Activated CD4-positive, alpha-beta memory T cell treated with anti-CD3 and anti-CD28 coated beads, Interleukin-2, amount 10 ng/mL, durations not matched to agents 7 days and 5 days (primary cell): ENCODE measurements at regions of chr6 and their contacts with region 1.

Region 1: DNA sequence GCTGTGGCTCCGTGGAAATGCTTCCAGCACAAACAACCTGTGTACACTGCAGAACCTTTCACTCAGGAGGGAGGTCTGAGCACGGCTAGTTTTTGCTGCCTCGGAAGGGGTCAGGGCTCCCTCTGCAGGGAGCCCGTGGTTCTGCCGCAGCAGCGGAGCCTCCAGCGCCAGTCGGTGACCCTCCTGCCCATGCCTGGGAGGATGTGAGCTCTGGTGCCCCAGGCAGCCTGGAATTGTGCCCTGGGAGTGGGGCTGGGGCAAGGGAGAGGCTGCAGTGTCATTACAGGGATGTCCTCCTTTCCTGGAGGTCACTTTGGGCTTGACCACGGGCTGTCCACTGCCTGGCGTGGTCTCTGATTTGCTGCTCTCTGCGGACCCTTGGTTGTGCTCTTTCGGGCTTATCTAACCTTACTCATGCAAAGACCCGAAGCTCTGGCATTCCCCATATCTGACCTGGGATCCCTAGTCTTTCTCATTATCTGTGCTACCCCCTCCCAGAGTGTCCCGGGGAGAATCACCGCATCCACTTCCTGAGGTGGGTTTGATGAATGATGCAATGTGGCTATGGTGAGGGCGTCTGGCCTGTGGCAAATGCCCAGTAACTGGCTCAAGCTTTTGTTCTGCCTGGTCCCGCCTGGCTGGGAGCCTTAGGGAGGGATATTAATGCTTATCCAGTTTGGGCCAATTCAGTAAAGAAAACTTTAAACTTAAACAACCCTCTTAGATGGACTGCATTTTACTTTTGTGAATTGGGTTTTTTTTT is 59.6 kb upstream of the TAGAP start:
- DNase-seq: peak; percentile 84
- H3K4me3 Mint-ChIP-seq: no peak overlapping the region
- H3K27ac Mint-ChIP-seq: peak overlapping the region; percentile 22
- H3K4me1 Mint-ChIP-seq: peaks cover 64% of the 10 kb centered on the region
- H3K27me3 Mint-ChIP-seq: no peaks in the 10 kb centered on the region

Region 2: GRCh38 chr6:158999666-159000403 is 104.5 kb before region 1 on chr6 and contains the start of gene RSPH3:
- CTCF ChIA-PET with region 1: interaction called, 410 read pairs
- POLR2A ChIA-PET with region 1: interaction called, 13 read pairs
- DNase-seq: peak; percentile 92
- H3K4me3 Mint-ChIP-seq: peak within 1 kb of the TSS; percentile 97
- H3K27ac Mint-ChIP-seq: peak within 1 kb of the TSS; percentile 72
- H3K4me1 Mint-ChIP-seq: peaks cover 44% of the 10 kb centered on the region
- H3K27me3 Mint-ChIP-seq: no peaks in the 10 kb centered on the region
- total RNA-seq, gene RSPH3: 3.4 to 3.7 TPM

Region 3: GRCh38 chr6:159017757-159018559 is 86.4 kb before region 1 on chr6:
- CTCF ChIA-PET with region 1: interaction called, 410 read pairs
- POLR2A ChIA-PET with region 1: interaction called, 6 read pairs
- DNase-seq: no peak
- H3K4me3 Mint-ChIP-seq: no peak overlapping the region
- H3K27ac Mint-ChIP-seq: peak overlapping the region; percentile 4
- H3K4me1 Mint-ChIP-seq: peaks cover 39% of the 10 kb centered on the region
- H3K27me3 Mint-ChIP-seq: no peaks in the 10 kb centered on the region

Region 4: DNA sequence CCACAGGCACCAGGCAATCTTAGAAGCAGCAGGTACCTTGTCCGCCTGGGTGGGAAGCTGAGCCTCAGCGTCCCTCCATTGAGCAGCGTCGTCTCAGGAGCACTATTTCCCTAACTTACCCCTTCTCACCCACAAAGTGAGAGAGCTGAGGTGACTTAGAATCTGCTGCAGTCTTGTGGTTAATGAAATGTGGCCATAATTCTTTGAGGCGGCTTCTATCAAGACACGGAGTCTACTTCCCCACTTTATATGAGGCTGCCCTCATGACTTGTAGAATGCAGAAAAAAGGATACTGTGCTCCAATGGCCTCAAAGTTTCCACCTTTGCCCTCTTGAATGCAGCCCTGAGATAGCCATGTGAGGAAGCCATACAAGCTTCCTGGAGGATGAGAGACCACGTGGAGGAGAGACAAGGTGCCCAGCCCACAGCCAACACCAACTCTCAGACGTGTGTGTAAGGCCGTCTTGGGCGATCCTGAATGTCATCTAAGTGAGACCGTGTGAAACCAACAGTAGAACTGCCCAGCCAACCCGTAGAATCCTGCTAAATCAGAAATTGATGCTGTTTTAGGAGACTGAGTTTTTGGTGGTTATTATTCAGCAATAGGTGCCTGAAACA is 50.5 kb before region 1 on chr6:
- CTCF ChIA-PET with region 1: interaction called, 11 read pairs
- POLR2A ChIA-PET with region 1: interaction called, 5 read pairs
- DNase-seq: no peak
- H3K4me3 Mint-ChIP-seq: no peak overlapping the region
- H3K27ac Mint-ChIP-seq: no peak overlapping the region
- H3K4me1 Mint-ChIP-seq: peaks cover 42% of the 10 kb centered on the region
- H3K27me3 Mint-ChIP-seq: peaks cover 3% of the 10 kb centered on the region

Region 5: DNA sequence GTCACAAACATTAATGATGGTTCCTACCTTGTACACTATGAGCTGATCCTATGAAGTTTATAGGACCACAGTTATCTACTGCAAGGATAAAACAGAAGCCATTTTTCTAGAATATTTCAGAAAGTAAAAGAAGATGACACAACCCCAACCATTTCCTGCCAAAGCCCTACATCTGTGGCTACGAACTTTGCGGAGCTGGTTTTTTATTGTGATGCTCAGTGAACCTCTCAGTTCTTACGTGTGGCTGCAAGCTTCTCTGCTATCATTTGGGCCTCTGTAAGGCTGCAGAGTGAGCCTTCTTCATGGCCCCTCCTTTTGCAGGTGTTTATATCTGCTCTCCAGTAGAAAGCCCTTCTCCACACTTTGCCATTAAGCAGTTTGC is 41.8 kb before region 1 on chr6:
- CTCF ChIA-PET with region 1: interaction called, 23 read pairs
- POLR2A ChIA-PET with region 1: interaction called, 29 read pairs
- DNase-seq: peak; percentile 76
- H3K4me3 Mint-ChIP-seq: peak overlapping the region; percentile 26
- H3K27ac Mint-ChIP-seq: peak overlapping the region; percentile 95
- H3K4me1 Mint-ChIP-seq: peaks cover 80% of the 10 kb centered on the region
- H3K27me3 Mint-ChIP-seq: peaks cover 4% of the 10 kb centered on the region

Region 6: DNA sequence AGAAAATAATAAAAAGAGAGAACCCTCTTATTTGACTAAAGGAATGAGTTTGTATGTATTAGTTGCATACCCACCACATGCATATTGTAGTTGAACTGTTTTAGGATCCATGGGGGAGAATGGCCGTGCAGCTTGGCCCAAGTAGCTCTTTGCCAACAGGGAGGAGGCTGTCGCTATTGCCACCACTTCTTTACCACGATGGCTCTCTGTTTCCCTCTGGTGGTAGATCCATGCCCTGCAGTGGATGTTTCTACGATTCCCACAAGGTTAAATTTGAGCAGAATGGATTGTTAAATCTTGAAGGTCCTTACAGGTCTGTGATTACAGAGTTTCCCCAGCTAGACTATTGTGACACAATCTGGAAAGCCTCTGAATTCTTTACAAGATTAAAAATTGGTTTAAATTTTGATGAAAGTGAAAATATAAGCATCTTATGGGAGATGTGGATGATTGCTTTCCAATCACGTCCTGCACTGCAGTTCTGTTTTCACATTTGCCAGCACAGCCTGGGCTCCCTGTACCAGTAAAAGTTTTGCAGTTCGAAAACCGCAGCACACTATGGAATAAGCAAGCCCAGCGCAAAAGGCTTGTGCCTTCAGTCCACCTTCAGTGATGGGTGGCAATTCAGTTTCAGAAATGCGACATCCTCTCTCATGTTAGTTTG is 30.5 kb after region 1 on chr6:
- CTCF ChIA-PET with region 1: interaction called, 33 read pairs
- POLR2A ChIA-PET with region 1: interaction called, 5 read pairs
- DNase-seq: peak; percentile 79
- H3K4me3 Mint-ChIP-seq: no peak overlapping the region
- H3K27ac Mint-ChIP-seq: no peak overlapping the region
- H3K4me1 Mint-ChIP-seq: peaks cover 2% of the 10 kb centered on the region
- H3K27me3 Mint-ChIP-seq: peaks cover 30% of the 10 kb centered on the region

Region 7: GRCh38 chr6:159184559-159184958 is 80.2 kb after region 1 on chr6:
- CTCF ChIA-PET with region 1: no interaction called
- POLR2A ChIA-PET with region 1: no interaction called
- DNase-seq: no peak
- H3K4me3 Mint-ChIP-seq: no peak overlapping the region
- H3K27ac Mint-ChIP-seq: no peak overlapping the region
- H3K4me1 Mint-ChIP-seq: peaks cover 18% of the 10 kb centered on the region
- H3K27me3 Mint-ChIP-seq: peaks cover 15% of the 10 kb centered on the region